ENCODE measurements at regions of chr6 and their contacts with region 1.

Region 1: DNA sequence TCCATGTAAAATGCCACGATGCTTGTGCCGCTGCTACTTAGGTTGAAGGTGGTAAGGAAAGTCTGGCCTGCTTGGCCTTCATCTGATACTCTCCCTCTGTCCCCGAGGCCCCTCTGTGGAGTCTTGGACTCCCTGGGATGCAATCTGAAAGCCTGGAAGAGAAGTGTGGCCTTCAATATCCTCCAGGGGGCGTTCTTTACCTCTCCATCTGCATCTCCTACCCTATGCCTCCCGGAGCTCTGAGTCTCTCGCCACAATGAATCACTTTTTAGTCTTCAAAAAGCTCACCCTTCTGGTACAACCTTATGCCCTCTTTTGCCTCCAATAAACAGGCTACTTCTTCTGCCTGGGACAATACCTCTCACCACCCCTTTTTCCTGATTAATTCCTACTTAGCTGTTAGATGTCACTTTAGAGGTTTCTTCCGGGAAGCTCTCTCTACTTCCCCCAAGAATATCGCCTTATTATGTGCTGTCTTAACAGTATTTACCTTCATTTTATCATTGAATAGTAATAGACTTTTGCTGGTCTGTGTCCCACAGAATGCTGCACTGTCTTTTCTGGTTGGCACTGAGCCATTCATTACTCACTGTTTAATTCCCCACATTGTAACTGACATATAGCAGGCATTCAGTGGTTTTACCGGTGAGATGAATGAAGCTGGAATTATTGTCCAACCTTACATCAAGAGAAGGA is 13.9 kb upstream of the ATG5 start:
- DNase-seq: peak; percentile 57
- ATAC-seq: peak; percentile 99
- H3K4me3 Mint-ChIP-seq: no peak overlapping the region
- H3K27ac Mint-ChIP-seq: no peak overlapping the region
- H3K4me1 Mint-ChIP-seq: peaks cover 3% of the 10 kb centered on the region
- H3K27me3 Mint-ChIP-seq: no peaks in the 10 kb centered on the region
- CTCF ChIP-seq: peak; percentile 84

Region 2: GRCh38 chr6:106325336-106326178 is 13.9 kb before region 1 on chr6 and contains the start of gene ATG5:
- CTCF ChIA-PET with region 1: interaction called, 11 read pairs
- POLR2A ChIA-PET with region 1: no interaction called
- DNase-seq: peak; percentile 100
- ATAC-seq: peak; percentile 91
- H3K4me3 Mint-ChIP-seq: peak within 1 kb of the TSS; percentile 92
- H3K27ac Mint-ChIP-seq: peak within 1 kb of the TSS; percentile 93
- H3K4me1 Mint-ChIP-seq: peaks cover 24% of the 10 kb centered on the region
- H3K27me3 Mint-ChIP-seq: peaks cover 9% of the 10 kb centered on the region
- CTCF ChIP-seq: no peak
- total RNA-seq, gene ATG5: 31.1 to 33.2 TPM (median 32.6 TPM) in 3 replicates

Region 3: GRCh38 chr6:106512048-106512967 is 172.8 kb after region 1 on chr6:
- CTCF ChIA-PET with region 1: interaction called, 11 read pairs
- POLR2A ChIA-PET with region 1: no interaction called
- DNase-seq: peak; percentile 70
- ATAC-seq: peak; percentile 59
- H3K4me3 Mint-ChIP-seq: peak overlapping the region; percentile 88
- H3K27ac Mint-ChIP-seq: no peak overlapping the region
- H3K4me1 Mint-ChIP-seq: peaks cover 31% of the 10 kb centered on the region
- H3K27me3 Mint-ChIP-seq: peaks cover 72% of the 10 kb centered on the region
- CTCF ChIP-seq: no peak

Region 4: GRCh38 chr6:106997390-106998158 is 658.1 kb after region 1 on chr6:
- CTCF ChIA-PET with region 1: interaction called, 11 read pairs
- POLR2A ChIA-PET with region 1: no interaction called
- DNase-seq: peak; percentile 86
- ATAC-seq: peak; percentile 91
- H3K4me3 Mint-ChIP-seq: no peak overlapping the region
- H3K27ac Mint-ChIP-seq: no peak overlapping the region
- H3K4me1 Mint-ChIP-seq: peaks cover 20% of the 10 kb centered on the region
- H3K27me3 Mint-ChIP-seq: no peaks in the 10 kb centered on the region; the same call in 1 of the 2 replicates
- CTCF ChIP-seq: peak; percentile 90